Common myeloid progenitor, CD34-positive (primary cell): ENCODE measurements at regions of chr15 and their contacts with region 1.

Region 1: DNA sequence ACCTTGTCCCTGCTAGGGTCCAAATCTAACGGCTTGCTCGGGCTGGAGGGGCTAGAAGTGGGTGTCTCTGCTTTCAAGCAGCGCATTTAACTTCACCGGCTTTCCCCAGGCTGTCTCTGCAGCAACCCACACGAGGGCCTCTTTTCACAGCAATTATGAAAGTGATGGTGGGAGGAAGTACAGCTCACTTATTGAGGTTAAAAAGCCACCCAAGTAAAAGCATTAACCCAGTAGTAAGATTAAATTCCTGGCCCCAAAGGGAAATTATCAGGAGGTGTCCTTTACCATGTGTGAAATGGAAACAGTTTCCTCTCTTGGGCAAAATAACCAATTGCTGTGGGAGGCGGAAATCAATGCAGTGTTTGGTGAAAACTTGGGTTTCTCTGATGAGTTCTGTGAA is 41.1 kb downstream of the NGRN start:
- DNase-seq: peak in 2 of 3 donors; percentile 30 to 44
- H3K4me3 ChIP-seq: no peak overlapping the region
- H3K27ac ChIP-seq: no peak overlapping the region
- H3K4me1 ChIP-seq: peaks cover 0 to 17% (median 4%) of the 10 kb centered on the region in 4 experiments
- H3K27me3 ChIP-seq: no peaks in the 10 kb centered on the region

Region 2: DNA sequence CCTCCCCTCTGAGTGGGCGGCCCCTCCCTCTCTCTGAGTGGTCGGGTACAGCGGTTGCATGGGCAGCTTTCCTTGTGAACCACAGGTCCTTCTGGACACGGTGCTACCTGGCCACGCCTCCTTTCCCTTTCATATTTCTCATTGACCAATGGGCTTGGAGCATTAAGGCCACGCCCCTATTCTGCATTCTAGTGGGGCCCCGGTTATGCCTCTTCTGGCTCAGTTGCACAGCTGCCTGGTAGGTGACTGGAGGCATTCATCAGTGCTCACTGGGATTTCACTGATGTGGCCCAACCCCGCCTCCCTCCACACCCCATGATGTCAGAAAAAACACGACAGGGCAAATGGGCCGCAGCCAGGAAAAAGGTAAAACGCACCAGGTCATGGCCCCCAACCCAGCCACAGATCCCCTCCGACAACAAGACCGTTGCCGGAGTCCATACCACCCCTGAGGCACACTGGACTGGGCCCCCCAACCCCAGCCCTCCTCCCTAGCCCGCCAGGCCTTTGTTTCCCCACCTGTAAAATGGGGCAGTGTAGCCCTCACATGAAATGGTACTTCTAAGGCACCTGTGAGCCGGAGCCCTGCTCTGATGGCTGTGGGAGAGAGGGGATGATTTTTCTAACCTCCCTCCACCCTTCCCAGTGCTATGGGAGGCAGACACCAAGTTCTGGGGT is 14.7 kb before region 1 on chr15:
- CTCF ChIA-PET with region 1: interaction called, 16 read pairs
- POLR2A ChIA-PET with region 1: no interaction called
- DNase-seq: peak in 2 of 3 donors; percentile 22 to 33
- H3K4me3 ChIP-seq: no peak overlapping the region
- H3K27ac ChIP-seq: no peak overlapping the region
- H3K4me1 ChIP-seq: peaks cover 3 to 21% (median 13%) of the 10 kb centered on the region in 4 experiments
- H3K27me3 ChIP-seq: no peaks in the 10 kb centered on the region